AG04450 (cell line): ENCODE measurements at regions of chr2 and their contacts with region 1.

Region 1: GRCh38 chr2:25362049-25362433 is 20.3 kb upstream of the DNMT3A start:
- DNase-seq: peak; percentile 76
- H3K4me3 ChIP-seq: peak overlapping the region; percentile 59
- H3K27ac ChIP-seq: no peak overlapping the region
- H3K27me3 ChIP-seq: peaks cover 2% of the 10 kb centered on the region
- CTCF ChIP-seq: peak; percentile 95

Region 2: GRCh38 chr2:25131567-25132298 is 230.3 kb before region 1 on chr2:
- CTCF ChIA-PET with region 1: no interaction called
- POLR2A ChIA-PET with region 1: no interaction called
- DNase-seq: no peak
- H3K4me3 ChIP-seq: no peak overlapping the region
- H3K27ac ChIP-seq: peak overlapping the region; percentile 21
- H3K27me3 ChIP-seq: peaks cover 20% of the 10 kb centered on the region
- CTCF ChIP-seq: no peak

Region 3: DNA sequence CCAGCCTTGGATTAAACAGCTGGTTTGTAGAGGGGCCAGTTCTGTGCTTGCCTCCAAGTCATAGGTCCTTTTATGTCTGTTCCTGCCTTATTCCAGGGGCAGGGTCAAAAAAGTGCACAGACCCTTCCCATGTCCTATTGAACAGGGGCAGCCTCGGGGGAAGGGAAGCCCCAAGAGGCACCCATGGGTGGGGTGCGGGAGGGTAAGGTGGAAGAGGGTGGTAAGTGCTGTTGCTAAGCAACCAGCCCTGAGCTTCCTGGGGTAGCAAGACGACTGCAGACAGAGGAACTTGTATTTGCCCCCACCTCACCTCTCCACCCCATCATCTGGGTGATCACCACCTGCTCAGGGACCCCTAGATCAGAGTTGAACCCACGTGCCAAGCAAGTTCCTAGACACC is 28.1 kb before region 1 on chr2:
- CTCF ChIA-PET with region 1: interaction called, 13 read pairs
- POLR2A ChIA-PET with region 1: interaction called, 6 read pairs
- DNase-seq: no peak
- H3K4me3 ChIP-seq: no peak overlapping the region
- H3K27ac ChIP-seq: no peak overlapping the region
- H3K27me3 ChIP-seq: no peaks in the 10 kb centered on the region
- CTCF ChIP-seq: no peak

Region 4: DNA sequence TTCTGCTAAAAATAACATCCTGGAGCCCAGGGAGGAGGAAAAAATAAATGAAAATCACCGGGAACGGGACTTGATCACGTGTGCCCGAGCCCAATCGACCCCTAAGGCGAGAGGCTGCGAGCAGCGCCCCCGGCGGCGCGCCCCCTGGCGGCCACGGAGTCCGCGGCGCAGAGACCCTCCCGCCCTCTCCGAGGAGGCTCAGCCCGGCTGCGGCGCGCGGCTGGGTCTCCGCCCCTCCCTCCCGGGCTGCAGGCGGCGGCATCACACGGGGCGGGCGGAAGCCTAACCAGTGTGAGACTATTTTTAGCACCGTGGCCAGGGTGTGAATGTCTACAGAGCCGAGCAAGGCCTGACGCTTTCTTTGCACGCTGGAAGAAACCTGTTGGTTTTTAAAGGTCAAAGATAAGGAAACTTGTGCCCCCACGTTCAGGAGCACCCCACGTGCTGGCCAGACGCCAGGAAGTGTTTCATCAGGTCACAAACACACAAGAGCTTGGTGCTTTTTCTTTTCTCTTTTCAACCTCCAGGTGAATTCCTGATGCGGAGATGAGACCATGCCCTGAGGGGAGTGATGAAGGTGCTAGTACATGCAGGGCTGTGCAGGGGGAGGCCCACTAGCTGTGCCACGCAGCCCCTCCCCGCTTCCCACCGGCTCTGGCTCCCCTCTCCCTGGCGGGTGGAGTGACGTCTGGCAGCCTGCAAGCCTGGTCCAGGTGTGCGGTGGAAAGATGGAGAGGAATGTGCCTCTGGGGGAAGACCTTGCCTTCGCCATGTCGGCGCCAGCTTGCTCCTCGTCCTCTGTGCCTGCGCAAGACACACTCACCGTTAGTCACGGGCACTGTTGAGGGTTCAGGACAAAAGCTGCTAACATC is 14.9 kb after region 1 on chr2:
- CTCF ChIA-PET with region 1: interaction called, 49 read pairs
- POLR2A ChIA-PET with region 1: no interaction called
- DNase-seq: peak; percentile 41
- H3K4me3 ChIP-seq: peak overlapping the region; percentile 45
- H3K27ac ChIP-seq: no peak overlapping the region
- H3K27me3 ChIP-seq: no peaks in the 10 kb centered on the region
- CTCF ChIP-seq: peak; percentile 72

Region 5: DNA sequence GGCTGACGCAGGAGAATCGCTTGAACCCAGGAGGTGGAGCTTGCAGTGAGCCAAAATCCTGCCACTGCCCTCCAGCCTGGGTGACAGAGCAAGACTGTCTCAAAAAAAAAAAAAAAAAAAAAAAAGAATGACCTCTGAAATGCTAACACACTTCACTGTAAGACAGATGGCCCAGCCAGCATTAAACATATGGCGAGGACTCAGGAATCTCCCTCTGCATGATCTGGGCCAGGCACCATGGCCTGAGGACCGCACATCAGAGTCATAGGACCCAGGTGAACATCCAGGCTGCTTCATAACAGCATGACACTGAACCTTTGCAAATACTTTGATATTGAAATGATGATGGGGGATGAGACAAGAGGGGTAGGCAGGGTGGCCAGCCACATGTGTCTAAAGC is 35.7 kb after region 1 on chr2:
- CTCF ChIA-PET with region 1: interaction called, 12 read pairs
- POLR2A ChIA-PET with region 1: no interaction called
- DNase-seq: no peak
- H3K4me3 ChIP-seq: no peak overlapping the region
- H3K27ac ChIP-seq: no peak overlapping the region
- H3K27me3 ChIP-seq: no peaks in the 10 kb centered on the region
- CTCF ChIP-seq: no peak

Region 6: GRCh38 chr2:25473758-25474340 is 111.8 kb after region 1 on chr2:
- CTCF ChIA-PET with region 1: interaction called, 19 read pairs
- POLR2A ChIA-PET with region 1: no interaction called
- DNase-seq: no peak
- H3K4me3 ChIP-seq: no peak overlapping the region
- H3K27ac ChIP-seq: no peak overlapping the region
- H3K27me3 ChIP-seq: no peaks in the 10 kb centered on the region
- CTCF ChIP-seq: no peak

Region 7: GRCh38 chr2:25558262-25558661 is 196.2 kb after region 1 on chr2:
- CTCF ChIA-PET with region 1: interaction called, 10 read pairs
- POLR2A ChIA-PET with region 1: no interaction called
- DNase-seq: peak; percentile 7
- H3K4me3 ChIP-seq: no peak overlapping the region
- H3K27ac ChIP-seq: no peak overlapping the region
- H3K27me3 ChIP-seq: no peaks in the 10 kb centered on the region
- CTCF ChIP-seq: no peak

Region 8: GRCh38 chr2:25664183-25664964 is 302.3 kb after region 1 on chr2:
- CTCF ChIA-PET with region 1: interaction called, 15 read pairs
- POLR2A ChIA-PET with region 1: no interaction called
- DNase-seq: peak; percentile 44
- H3K4me3 ChIP-seq: no peak overlapping the region
- H3K27ac ChIP-seq: no peak overlapping the region
- H3K27me3 ChIP-seq: no peaks in the 10 kb centered on the region
- CTCF ChIP-seq: peak; percentile 85